AG04450 (cell line): ENCODE measurements at regions of chr1 and their contacts with region 1.

Region 1: DNA sequence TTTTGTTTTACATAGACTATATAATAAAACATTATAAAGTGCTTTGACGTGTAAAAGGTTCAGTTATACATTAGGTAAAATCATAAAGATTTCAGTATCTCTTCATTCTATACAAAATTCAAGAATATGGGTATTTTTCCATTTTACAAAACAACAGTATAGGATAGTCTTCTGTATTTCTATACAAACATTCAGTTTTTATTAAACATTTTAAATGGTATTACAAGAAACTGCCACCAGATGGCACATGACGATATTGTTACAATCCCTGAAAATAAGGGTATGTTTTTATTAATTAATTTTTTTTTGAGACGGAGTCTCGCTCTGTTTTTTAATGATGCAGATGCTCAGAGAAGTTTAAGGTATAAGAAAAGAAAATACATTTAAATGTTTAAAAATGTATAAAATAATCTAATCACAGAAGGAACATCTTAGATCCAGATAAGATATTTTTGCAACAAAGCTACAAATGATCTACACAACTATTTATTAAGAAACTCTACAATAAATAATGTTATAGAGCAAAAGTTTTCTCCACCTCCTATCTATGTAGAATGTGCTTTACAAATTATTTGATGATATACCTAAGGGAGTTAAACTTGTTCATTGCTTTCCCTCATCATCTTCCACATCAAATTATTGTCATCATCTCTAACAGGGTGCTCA is 23.5 kb upstream of the RSBN1 start:
- DNase-seq: peak; percentile 16
- H3K4me3 ChIP-seq: no peak overlapping the region
- H3K27ac ChIP-seq: no peak overlapping the region
- H3K27me3 ChIP-seq: no peaks in the 10 kb centered on the region
- CTCF ChIP-seq: peak; percentile 52

Region 2: GRCh38 chr1:113721010-113721409 is 114.8 kb before region 1 on chr1:
- CTCF ChIA-PET with region 1: no interaction called
- POLR2A ChIA-PET with region 1: no interaction called
- DNase-seq: no peak
- H3K4me3 ChIP-seq: no peak overlapping the region
- H3K27ac ChIP-seq: no peak overlapping the region
- H3K27me3 ChIP-seq: no peaks in the 10 kb centered on the region
- CTCF ChIP-seq: no peak

Region 3: GRCh38 chr1:113821916-113822315 is 13.9 kb before region 1 on chr1:
- CTCF ChIA-PET with region 1: interaction called, 11 read pairs
- POLR2A ChIA-PET with region 1: no interaction called
- DNase-seq: no peak
- H3K4me3 ChIP-seq: no peak overlapping the region
- H3K27ac ChIP-seq: no peak overlapping the region
- H3K27me3 ChIP-seq: no peaks in the 10 kb centered on the region
- CTCF ChIP-seq: no peak

Region 4: GRCh38 chr1:113859478-113860175 is 23.9 kb after region 1 on chr1:
- CTCF ChIA-PET with region 1: interaction called, 30 read pairs
- POLR2A ChIA-PET with region 1: no interaction called
- DNase-seq: no peak
- H3K4me3 ChIP-seq: no peak overlapping the region
- H3K27ac ChIP-seq: no peak overlapping the region
- H3K27me3 ChIP-seq: no peaks in the 10 kb centered on the region
- CTCF ChIP-seq: no peak

Region 5: DNA sequence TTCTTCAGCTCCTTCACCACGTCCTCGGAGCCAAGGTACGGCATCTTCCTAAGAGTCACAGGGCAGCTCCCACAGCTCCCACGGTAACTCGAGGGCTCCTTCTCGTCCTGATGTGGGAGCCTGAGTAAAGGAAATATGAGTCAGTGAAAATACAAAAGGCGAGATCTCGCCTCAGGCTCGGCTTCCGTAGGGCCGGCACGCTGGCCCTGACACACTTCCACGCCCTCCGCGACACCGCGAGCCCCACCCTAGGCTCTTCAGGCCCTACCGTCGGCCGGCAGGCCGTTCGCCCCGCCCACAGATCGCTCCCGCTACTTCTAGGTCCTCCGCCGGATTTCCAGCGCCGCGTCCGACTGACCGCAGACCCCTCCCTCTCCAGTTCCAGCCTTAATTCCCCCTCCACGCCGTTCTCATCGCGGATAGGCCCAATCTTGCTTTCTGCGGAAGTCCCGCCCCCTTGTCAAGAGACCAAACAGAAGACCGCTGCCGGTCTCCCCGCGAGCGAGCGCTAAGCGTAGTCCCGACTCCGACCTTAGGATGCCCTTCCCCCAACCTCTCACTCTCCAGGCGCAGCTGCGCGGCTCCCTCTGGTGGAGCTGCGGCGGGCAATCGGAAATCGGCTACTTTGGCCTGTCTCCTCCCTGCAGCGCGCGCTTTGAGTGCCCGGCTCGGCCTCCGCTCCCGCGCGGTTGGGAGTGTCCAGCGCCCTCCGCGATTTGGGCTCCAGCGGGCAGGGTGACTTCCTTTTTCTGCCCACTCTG is 69.1 kb after region 1 on chr1 and contains the starts of genes AP4B1 and DCLRE1B:
- CTCF ChIA-PET with region 1: interaction called, 23 read pairs
- POLR2A ChIA-PET with region 1: no interaction called
- DNase-seq: peak; percentile 100
- H3K4me3 ChIP-seq: peak within 1 kb of the TSS; percentile 85
- H3K27ac ChIP-seq: peak within 1 kb of the TSS; percentile 85
- H3K27me3 ChIP-seq: no peaks in the 10 kb centered on the region
- CTCF ChIP-seq: peak; percentile 75
- polyA plus RNA-seq, gene AP4B1: 13.6 and 16.5 TPM in 2 replicates
- polyA plus RNA-seq, gene DCLRE1B: 2.7 and 3.2 TPM in 2 replicates

Region 6: GRCh38 chr1:113928941-113929749 is 93.4 kb after region 1 on chr1 and contains the start of gene HIPK1:
- CTCF ChIA-PET with region 1: interaction called, 31 read pairs
- POLR2A ChIA-PET with region 1: no interaction called
- DNase-seq: peak; percentile 65
- H3K4me3 ChIP-seq: peak within 1 kb of the TSS; percentile 98
- H3K27ac ChIP-seq: peak within 1 kb of the TSS; percentile 82
- H3K27me3 ChIP-seq: no peaks in the 10 kb centered on the region
- CTCF ChIP-seq: no peak
- polyA plus RNA-seq, gene HIPK1: 28.4 and 31.3 TPM in 2 replicates

Region 7: DNA sequence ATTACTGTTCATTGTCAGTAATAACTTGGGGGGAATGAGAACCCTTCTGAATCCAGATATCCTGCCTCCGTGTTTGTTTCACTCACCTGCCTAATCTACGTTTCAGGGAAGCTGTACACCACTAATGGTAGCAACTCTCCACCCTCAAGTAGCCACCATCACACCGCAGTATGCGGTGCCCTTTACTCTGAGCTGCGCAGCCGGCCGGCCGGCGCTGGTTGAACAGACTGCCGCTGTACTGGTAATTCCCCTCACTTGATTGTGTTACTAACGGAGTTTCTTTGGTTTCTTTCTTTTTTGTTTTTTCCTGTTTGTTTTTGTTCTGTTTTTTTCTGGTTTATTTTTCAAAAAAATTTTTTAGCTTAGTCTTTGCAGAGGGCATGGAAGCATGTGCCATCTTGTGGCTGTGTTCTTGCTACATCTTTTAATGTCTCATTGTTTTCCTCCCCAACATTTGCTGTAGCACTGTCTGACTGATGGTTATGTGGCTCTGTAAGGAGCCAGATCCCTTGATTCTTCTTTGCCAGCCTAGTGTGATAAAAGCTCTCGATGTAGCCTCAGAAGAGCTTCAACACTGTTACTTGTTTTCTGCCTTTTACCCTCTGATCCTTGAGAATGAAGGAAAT is 127.6 kb after region 1 on chr1:
- CTCF ChIA-PET with region 1: interaction called, 40 read pairs
- POLR2A ChIA-PET with region 1: no interaction called
- DNase-seq: no peak
- H3K4me3 ChIP-seq: no peak overlapping the region
- H3K27ac ChIP-seq: no peak overlapping the region
- H3K27me3 ChIP-seq: no peaks in the 10 kb centered on the region
- CTCF ChIP-seq: peak; percentile 30

Region 8: GRCh38 chr1:113978863-113979702 is 143.3 kb after region 1 on chr1 and contains the start of gene OLFML3:
- CTCF ChIA-PET with region 1: interaction called, 21 read pairs
- POLR2A ChIA-PET with region 1: no interaction called
- DNase-seq: peak; percentile 91
- H3K4me3 ChIP-seq: peak within 1 kb of the TSS; percentile 70
- H3K27ac ChIP-seq: peak within 1 kb of the TSS; percentile 99
- H3K27me3 ChIP-seq: no peaks in the 10 kb centered on the region
- CTCF ChIP-seq: peak; percentile 70
- polyA plus RNA-seq, gene OLFML3: 90.3 and 105 TPM in 2 replicates